AG04449 (cell line): ENCODE measurements at regions of chr11 and their contacts with region 1.

Region 1: DNA sequence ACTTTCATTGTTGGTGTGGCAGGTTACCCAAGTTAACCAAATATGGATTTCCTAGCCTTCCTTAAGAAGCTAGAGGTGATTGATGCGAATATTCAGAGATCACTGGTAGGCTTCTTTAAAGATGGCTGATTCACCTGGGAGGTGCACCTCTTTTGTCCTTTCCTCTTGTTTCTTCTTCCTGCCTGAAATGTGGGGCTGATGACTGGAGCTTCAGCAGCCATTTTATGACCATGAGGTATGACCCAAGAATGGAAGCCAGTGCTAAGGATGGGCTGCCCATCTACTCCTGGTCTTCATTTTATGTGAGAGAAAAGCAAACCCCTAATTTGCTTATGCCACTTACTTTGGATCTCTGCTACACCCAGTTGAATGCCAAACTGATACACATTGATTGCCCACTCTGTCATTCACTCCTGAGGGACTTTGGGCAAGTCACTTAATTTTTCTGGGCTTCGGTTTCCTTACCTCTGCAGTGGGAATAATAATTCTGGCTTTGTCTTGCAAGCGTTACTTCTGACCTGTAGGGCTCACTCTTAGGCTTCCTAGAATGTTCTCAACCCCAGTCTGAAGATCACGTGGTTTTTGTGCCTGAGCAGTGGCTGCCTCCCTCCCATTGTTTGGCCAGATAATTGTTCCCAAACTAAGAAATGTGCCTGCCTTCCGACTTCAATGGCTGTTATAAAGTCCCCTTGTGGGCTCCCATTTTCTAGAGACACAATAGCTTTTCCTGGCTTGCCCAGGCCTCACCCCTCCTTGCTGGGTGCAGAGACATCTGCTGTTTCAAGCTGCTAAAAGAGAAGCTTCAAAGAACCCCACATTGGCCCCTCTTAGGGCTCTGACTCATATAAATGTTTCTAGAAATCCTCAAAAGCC is 243.1 kb downstream of the ST3GAL4 start:
- DNase-seq: no peak
- H3K4me3 ChIP-seq: no peak overlapping the region
- CTCF ChIP-seq: no peak

Region 2: GRCh38 chr11:126585781-126586491 is 12.6 kb before region 1 on chr11:
- CTCF ChIA-PET with region 1: interaction called, 12 read pairs
- POLR2A ChIA-PET with region 1: no interaction called
- DNase-seq: peak; percentile 89
- H3K4me3 ChIP-seq: peak overlapping the region; percentile 36
- CTCF ChIP-seq: no peak

Region 3: DNA sequence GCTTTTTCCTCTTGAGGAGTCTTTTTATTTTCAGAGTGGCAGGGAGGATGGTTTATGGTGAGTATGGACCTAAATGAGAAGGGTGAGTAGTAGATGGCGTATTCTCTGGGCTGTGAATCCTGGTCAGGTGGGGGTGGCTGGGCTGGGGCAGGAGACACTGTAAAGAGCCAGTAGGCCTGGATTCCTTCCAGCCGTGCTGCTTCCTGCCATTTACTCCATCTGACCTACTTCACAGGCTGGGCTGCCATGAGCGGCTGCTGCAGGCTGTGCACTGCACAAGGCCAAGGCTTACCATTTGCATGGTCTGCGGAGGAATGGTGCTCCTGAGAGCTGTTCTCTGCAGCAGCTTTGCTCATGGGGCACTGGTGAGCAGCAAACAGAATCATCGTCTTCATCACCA is 104.4 kb after region 1 on chr11:
- CTCF ChIA-PET with region 1: no interaction called
- POLR2A ChIA-PET with region 1: no interaction called
- DNase-seq: no peak
- H3K4me3 ChIP-seq: no peak overlapping the region
- CTCF ChIP-seq: no peak